ENCODE measurements at regions of chr4 and their contacts with region 1.

Region 1: DNA sequence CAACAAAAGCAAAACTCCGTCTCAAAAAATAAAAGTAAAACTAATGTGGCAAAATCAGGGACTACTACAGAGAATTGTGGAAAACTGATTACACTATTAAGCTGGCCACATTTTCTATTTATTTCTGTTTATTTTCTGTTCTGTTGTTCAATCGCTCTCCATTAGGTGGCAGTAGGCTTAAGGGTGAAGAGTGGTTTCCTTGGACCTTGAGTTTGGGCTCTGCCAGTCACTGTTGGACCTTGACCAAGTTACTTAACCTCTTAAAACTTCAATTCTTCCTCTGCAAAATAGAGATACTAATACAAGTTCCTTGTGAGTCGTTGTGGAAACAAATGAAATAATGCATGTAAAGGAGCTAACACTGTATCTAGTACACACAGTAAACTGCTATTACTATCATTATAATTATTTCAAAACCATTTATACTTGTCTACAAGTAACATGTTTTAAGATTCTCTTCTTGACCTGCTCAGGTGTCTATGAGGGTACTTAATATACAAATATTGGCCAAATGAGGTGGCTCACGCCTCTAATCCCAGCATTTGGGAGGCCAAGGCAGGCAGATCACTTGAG is 15.2 kb downstream of the HSD17B11 start:
- DNase-seq: peak; percentile 61
- ATAC-seq: peak; percentile 75
- H3K4me3 ChIP-seq: no peak overlapping the region
- H3K27ac ChIP-seq: no peak overlapping the region
- H3K4me1 ChIP-seq: peaks cover 15% of the 10 kb centered on the region
- H3K27me3 ChIP-seq: no peaks in the 10 kb centered on the region
- CTCF ChIP-seq: peak; percentile 75
- EP300 ChIP-seq: peak in 1 of 2 experiments; percentile 20; a peak in 1 of 4 replicates
- POLR2A ChIP-seq: no peak
- RAD21 ChIP-seq: peak; percentile 76

Region 2: GRCh38 chr4:86972997-86973396 is 402.8 kb before region 1 on chr4:
- CTCF ChIA-PET with region 1: no interaction called
- POLR2A ChIA-PET with region 1: no interaction called
- in situ Hi-C with region 1: no loop called
- intact Hi-C with region 1: no loop called
- DNase-seq: peak; percentile 72
- ATAC-seq: peak; percentile 71
- H3K4me3 ChIP-seq: peak overlapping the region; percentile 34 to 55 (median 34); a peak in 5 of 6 replicates
- H3K27ac ChIP-seq: peak overlapping the region; percentile 94
- H3K4me1 ChIP-seq: peaks cover 79% of the 10 kb centered on the region
- H3K27me3 ChIP-seq: no peaks in the 10 kb centered on the region
- CTCF ChIP-seq: peak; percentile 5; the same call in 1 of the 2 replicates
- EP300 ChIP-seq: peak in 1 of 2 experiments; percentile 84; a peak in 2 of 4 replicates
- POLR2A ChIP-seq: no peak
- RAD21 ChIP-seq: no peak

Region 3: DNA sequence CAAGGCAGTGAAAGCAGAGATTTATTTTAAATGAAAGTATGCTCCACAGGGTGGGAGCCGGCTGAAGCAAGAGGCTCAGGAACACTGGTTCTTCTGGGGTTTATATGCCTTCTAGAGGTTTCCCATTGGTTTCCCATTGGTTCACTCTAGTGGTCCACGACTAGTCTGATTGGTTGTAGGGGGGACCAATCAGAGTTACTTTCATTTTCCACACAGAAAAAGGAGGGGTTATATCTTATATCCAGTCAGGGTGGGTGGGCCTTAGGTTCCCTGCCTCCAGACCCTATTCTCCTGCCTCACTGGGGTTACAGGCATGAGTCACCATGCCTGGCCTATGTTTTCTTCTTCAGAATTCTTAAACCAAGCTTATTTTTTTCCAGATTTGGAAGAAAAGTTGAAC is 257.0 kb before region 1 on chr4:
- CTCF ChIA-PET with region 1: no interaction called
- POLR2A ChIA-PET with region 1: no interaction called
- in situ Hi-C with region 1: no loop called
- intact Hi-C with region 1: no loop called
- DNase-seq: no peak
- ATAC-seq: no peak; the same call in 2 of the 3 replicates
- H3K4me3 ChIP-seq: no peak overlapping the region
- H3K27ac ChIP-seq: no peak overlapping the region
- H3K4me1 ChIP-seq: peaks cover 34% of the 10 kb centered on the region
- H3K27me3 ChIP-seq: no peaks in the 10 kb centered on the region
- CTCF ChIP-seq: no peak
- EP300 ChIP-seq: no peak
- POLR2A ChIP-seq: no peak
- RAD21 ChIP-seq: no peak

Region 4: DNA sequence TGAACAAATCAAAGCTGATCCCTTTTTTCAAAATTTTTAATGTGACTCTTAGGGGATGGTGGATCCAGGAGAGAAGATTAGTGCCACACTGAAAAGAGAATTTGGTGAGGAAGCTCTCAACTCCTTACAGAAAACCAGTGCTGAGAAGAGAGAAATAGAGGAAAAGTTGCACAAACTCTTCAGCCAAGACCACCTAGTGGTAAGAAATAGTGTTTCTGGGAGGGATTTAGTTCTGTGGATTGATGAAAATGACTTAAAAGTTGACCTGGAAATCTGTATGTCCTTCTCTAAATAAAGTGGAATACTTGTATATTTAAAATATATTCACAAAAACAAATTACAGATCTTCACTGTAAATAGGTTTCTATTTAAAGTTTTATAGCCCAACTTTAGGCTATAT is 75.7 kb after region 1 on chr4:
- CTCF ChIA-PET with region 1: interaction called, 7 read pairs
- POLR2A ChIA-PET with region 1: no interaction called
- in situ Hi-C with region 1: no loop called
- intact Hi-C with region 1: loop called (anchors 1 kb)
- DNase-seq: peak; percentile 2
- ATAC-seq: no peak
- H3K4me3 ChIP-seq: no peak overlapping the region
- H3K27ac ChIP-seq: no peak overlapping the region
- H3K4me1 ChIP-seq: peaks cover 9% of the 10 kb centered on the region
- H3K27me3 ChIP-seq: no peaks in the 10 kb centered on the region
- CTCF ChIP-seq: no peak
- EP300 ChIP-seq: no peak
- POLR2A ChIP-seq: no peak
- RAD21 ChIP-seq: no peak